ENCODE measurements at regions of chr1 and their contacts with region 1.

Region 1: GRCh38 chr1:17502326-17502778 is 37.1 kb upstream of the ARHGEF10L start:
- DNase-seq: peak; percentile 97
- ATAC-seq: peak; percentile 99
- H3K4me3 Mint-ChIP-seq: no peak overlapping the region
- H3K27ac Mint-ChIP-seq: no peak overlapping the region
- H3K4me1 Mint-ChIP-seq: peaks cover 7% of the 10 kb centered on the region; the same call in 1 of the 2 replicates
- H3K27me3 Mint-ChIP-seq: 0 out of 2 replicates have a peak, but pooled peaks cover 4% of the 10 kb centered on the region
- CTCF ChIP-seq: peak; percentile 97

Region 2: GRCh38 chr1:17540255-17541001 is 38.1 kb after region 1 on chr1:
- CTCF ChIA-PET with region 1: interaction called, 14 read pairs
- POLR2A ChIA-PET with region 1: no interaction called
- DNase-seq: peak; percentile 95
- ATAC-seq: peak; percentile 80
- H3K4me3 Mint-ChIP-seq: peak overlapping the region; percentile 83
- H3K27ac Mint-ChIP-seq: peak overlapping the region; percentile 88
- H3K4me1 Mint-ChIP-seq: peaks cover 55% of the 10 kb centered on the region
- H3K27me3 Mint-ChIP-seq: no peaks in the 10 kb centered on the region
- CTCF ChIP-seq: no peak

Region 3: DNA sequence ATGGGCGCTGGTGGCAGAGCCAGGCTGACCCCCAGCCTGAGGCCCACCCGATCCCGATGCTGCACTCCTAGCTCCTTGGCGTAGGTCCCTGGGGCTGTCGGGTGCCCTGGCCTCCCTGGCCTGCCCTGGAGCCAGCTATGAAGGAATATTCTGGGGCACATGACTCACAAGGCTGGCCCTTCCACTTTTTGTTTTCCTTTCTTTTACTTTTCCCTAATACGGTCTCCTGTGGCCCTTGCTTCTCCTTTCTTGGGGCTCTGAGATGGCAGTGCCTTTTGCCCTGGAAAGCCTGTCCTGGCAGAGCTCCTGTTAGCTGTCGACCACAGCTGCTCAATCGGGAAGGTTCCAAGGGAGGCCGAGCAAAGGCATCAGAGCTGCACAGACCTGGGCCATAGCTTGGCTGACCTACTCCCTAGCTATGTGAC is 59.2 kb after region 1 on chr1:
- CTCF ChIA-PET with region 1: interaction called, 17 read pairs
- POLR2A ChIA-PET with region 1: no interaction called
- DNase-seq: no peak
- ATAC-seq: no peak
- H3K4me3 Mint-ChIP-seq: no peak overlapping the region
- H3K27ac Mint-ChIP-seq: peak overlapping the region; percentile 95
- H3K4me1 Mint-ChIP-seq: peaks cover 92% of the 10 kb centered on the region
- H3K27me3 Mint-ChIP-seq: no peaks in the 10 kb centered on the region
- CTCF ChIP-seq: no peak

Region 4: DNA sequence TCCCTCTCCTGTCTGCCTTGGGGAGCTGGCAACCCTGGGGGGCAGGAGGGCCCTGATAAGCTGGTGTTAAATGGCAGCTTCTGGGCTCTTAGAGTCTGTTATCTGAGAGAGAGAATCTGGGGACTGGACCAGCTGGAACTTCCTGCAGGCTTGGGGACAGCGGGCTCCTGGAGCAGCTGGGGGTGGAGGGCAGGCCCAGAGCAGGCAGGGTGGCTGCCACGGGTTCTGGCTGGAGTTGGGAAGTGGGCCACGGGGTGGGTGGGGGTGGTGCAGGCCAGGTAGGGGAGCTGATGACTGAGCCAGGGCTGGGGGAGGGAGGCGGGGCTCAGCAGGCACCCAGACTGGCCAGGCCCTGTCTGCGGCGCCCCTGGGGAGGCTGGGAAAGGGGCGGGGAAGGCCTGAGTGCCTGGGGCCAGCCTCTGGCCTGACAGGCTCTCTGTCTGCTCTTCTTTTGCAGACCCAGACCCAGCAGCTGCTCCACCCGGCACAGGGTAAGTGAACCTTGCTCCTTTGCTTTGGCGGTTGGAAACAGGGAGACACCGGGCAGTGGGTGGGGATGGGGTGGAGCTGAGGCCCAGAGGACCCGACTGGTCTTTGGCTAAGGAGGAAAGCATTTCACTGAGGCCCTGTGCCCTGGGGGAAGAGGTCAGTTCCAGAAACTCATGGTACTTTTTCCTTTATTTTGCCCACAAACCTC is 85.8 kb after region 1 on chr1:
- CTCF ChIA-PET with region 1: interaction called, 20 read pairs
- POLR2A ChIA-PET with region 1: interaction called, 3 read pairs
- DNase-seq: peak; percentile 56
- ATAC-seq: peak; percentile 53
- H3K4me3 Mint-ChIP-seq: no peak overlapping the region
- H3K27ac Mint-ChIP-seq: peak overlapping the region; percentile 89
- H3K4me1 Mint-ChIP-seq: peaks cover 38% of the 10 kb centered on the region
- H3K27me3 Mint-ChIP-seq: no peaks in the 10 kb centered on the region
- CTCF ChIP-seq: no peak

Region 5: GRCh38 chr1:17635811-17636210 is 133.5 kb after region 1 on chr1:
- CTCF ChIA-PET with region 1: no interaction called
- POLR2A ChIA-PET with region 1: no interaction called
- DNase-seq: no peak
- ATAC-seq: no peak
- H3K4me3 Mint-ChIP-seq: no peak overlapping the region
- H3K27ac Mint-ChIP-seq: peak overlapping the region; percentile 41; the same call in 1 of the 2 replicates
- H3K4me1 Mint-ChIP-seq: no peaks in the 10 kb centered on the region
- H3K27me3 Mint-ChIP-seq: no peaks in the 10 kb centered on the region
- CTCF ChIP-seq: no peak

Measured in WTC11 (cell line).